ENCODE measurements at regions of chr1 and their contacts with region 1.

Region 1: GRCh38 chr1:19010995-19011844 is 54.7 kb upstream of the IFFO2 start:
- DNase-seq: peak; percentile 91
- H3K4me3 ChIP-seq: peak overlapping the region in 2 of 4 donors; percentile 17 to 20
- H3K27ac ChIP-seq: peak overlapping the region; percentile 76 to 93 (median 82)
- H3K4me1 ChIP-seq: peaks cover 0 to 33% (median 27%) of the 10 kb centered on the region in 4 donors
- H3K27me3 ChIP-seq: no peaks in the 10 kb centered on the region
- CTCF ChIP-seq: no peak
- EP300 ChIP-seq: peak in 1 of 4 donors; percentile 38
- POLR2A ChIP-seq: no peak

Region 2: DNA sequence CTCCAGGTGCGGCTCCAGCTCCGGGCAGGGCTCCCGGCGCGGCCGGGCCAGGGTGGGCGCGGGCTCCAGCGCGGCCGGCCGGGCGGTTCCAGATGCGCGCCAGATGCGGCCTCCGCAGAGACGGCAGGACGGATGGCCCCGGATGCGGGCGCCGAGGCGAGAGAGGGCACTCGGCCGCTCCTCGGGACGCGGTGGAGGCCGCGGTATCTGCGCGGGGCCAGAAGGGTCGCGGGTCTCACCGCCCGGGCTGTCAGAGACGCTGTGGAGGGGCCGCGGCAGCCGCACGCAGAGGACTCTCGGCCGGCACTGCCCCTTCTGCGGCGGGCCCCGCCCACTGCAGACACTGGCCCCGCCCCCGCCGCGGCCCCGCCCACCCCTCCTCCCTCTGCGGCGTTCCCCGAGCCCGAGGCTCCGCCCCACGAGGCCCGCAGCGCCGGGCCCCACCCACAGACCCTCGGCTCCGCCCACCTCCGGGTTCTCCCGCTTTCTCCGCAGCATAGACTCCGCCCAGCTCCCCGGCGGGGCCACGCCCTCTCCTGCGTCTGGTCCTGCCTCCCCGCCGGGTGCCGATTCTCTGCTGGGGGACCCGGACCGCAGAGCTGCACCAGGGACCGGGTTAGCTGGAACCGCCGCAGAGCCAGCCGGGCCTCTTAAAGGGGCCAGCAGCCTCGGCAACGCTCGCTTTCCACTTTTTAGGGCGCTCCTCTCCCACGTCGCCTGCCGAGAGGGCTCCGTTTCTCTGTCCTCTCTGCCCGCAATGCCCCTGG is 54.7 kb before region 1 on chr1 and contains the start of gene IFFO2:
- intact Hi-C with region 1: loop called (anchors 2 kb)
- DNase-seq: peak; percentile 99
- H3K4me3 ChIP-seq: peak within 1 kb of the TSS; percentile 58 to 88 (median 76)
- H3K27ac ChIP-seq: peak within 1 kb of the TSS; percentile 92 to 95 (median 94)
- H3K4me1 ChIP-seq: peaks cover 0 to 48% (median 37%) of the 10 kb centered on the region in 4 donors
- H3K27me3 ChIP-seq: no peaks in the 10 kb centered on the region
- CTCF ChIP-seq: no peak
- EP300 ChIP-seq: no peak
- POLR2A ChIP-seq: peak; percentile 50 to 73
- total RNA-seq, gene IFFO2: 7.5 to 35.0 (median 13.8) TPM

Region 3: DNA sequence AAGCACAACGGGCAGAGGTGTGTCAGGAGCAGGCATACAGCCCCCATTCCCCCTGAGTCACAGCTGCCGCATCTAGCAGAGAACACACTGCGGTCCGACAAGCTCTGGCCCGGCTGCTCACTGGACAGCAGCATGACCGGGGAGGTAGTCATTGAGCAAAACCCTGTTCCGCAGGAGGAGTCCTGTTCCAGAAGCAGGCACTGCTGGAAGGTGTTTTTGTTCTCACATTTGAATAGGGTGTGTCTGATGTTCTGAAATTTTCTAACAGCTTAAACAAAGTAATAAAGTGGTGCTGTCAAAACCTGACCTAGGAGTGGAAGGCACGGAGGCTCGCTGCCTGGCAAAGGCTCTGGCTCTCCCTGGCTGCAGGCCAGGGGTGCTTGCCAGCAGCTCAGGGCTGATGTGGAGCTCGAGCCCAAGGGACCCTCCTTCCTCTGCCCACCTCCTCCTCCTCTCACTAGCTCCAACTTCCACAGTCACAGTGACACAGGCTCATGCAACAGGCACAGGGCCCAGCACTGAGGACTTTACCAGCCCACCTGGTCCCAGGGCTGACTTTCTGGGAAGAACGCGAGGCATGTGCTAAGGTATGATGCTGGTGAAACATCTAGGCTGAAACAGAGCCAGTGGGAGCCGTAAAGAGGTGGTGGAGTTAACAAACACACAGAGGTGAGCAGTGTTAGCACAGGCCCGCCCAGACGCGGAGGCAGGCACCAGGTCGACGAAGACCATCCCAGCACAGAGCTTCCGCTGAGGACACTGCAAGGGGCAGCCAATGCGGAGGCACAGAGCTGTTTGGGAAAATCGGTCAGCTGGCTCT is 63.9 kb after region 1 on chr1:
- intact Hi-C with region 1: loop called (anchors 5 kb)
- DNase-seq: no peak
- H3K4me3 ChIP-seq: no peak overlapping the region
- H3K27ac ChIP-seq: peak overlapping the region; percentile 48 to 67 (median 62)
- H3K4me1 ChIP-seq: peaks cover 0 to 36% (median 31%) of the 10 kb centered on the region in 4 donors
- H3K27me3 ChIP-seq: no peaks in the 10 kb centered on the region
- CTCF ChIP-seq: no peak
- EP300 ChIP-seq: no peak
- POLR2A ChIP-seq: no peak

Region 4: GRCh38 chr1:19414515-19415121 is 403.4 kb after region 1 on chr1:
- intact Hi-C with region 1: no loop called
- DNase-seq: peak; percentile 91
- H3K4me3 ChIP-seq: peak overlapping the region in 1 of 4 donors; percentile 17
- H3K27ac ChIP-seq: peak overlapping the region; percentile 82 to 98 (median 91)
- H3K4me1 ChIP-seq: peaks cover 0 to 99% (median 80%) of the 10 kb centered on the region in 4 donors
- H3K27me3 ChIP-seq: no peaks in the 10 kb centered on the region
- CTCF ChIP-seq: no peak
- EP300 ChIP-seq: peak in 3 of 4 donors; percentile 8 to 97 (median 48)
- POLR2A ChIP-seq: no peak